Kidney (tissue), 22 donors: ENCODE measurements at regions of chr6 and their contacts with region 1.

Region 1: GRCh38 chr6:2999618-3000557 is at the start of gene NQO2:
- DNase-seq: peak; percentile 93 to 98 (median 95)
- H3K4me3 ChIP-seq: peak within 1 kb of the TSS; percentile 72 to 93 (median 88)
- H3K27ac ChIP-seq: peak within 1 kb of the TSS; percentile 93 to 95
- H3K4me1 ChIP-seq: peaks cover 0 to 9% (median 0%) of the 10 kb centered on the region in 3 donors
- H3K27me3 ChIP-seq: no peaks in the 10 kb centered on the region
- CTCF ChIP-seq: no peak
- total RNA-seq, gene NQO2: 37.0 TPM

Region 2: GRCh38 chr6:3057063-3057770 is 57.3 kb after region 1 on chr6:
- intact Hi-C with region 1: loop called (anchors 5 kb)
- DNase-seq: no peak
- H3K4me3 ChIP-seq: no peak overlapping the region
- H3K27ac ChIP-seq: no peak overlapping the region
- H3K4me1 ChIP-seq: peaks cover 0 to 2% (median 0%) of the 10 kb centered on the region in 3 donors
- H3K27me3 ChIP-seq: no peaks in the 10 kb centered on the region
- CTCF ChIP-seq: no peak